RWPE1 (cell line): ENCODE measurements at regions of chr17 and their contacts with region 1.

Region 1: GRCh38 chr17:75774991-75775668 is 9.5 kb upstream of the UNK start:
- DNase-seq: no peak
- H3K27ac ChIP-seq: peak overlapping the region; percentile 73
- CTCF ChIP-seq: no peak

Region 2: DNA sequence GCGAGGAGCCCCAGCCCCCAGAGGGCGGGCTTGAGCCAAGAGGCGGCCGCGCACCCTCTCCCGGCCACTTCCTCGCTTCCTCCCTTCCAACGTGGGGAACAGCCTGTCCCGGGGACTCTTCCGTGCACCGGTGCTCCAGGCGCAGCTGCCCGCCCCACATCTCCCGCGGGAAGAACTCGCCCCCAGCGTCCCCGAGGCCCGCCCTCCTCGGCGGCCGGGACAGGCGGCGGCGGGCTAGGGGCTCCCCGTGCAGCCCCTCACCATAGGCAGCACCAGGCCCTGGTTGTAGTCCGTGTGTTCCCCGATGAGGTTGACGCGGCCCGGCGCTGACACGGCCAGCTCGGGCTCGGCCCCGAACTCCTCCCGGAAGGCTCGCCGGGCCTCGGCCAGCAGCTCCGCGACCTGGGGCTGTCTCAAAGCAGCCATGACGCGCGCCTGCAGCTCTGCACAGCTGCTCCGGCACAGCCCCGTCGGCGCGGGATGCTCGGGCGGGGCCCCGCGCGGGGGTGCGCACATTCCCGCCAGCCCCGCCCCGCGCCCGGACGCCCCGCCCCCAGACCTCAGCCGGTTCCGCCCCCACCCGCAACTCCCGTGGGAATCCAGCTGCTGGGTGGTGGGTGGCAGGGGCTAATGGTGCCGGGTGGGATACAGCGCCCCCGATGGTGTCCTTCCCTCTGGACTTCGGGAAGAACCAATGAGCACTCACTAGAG is 10.3 kb before region 1 on chr17 and contains the start of gene GALK1:
- CTCF ChIA-PET with region 1: interaction called, 15 read pairs
- POLR2A ChIA-PET with region 1: no interaction called
- DNase-seq: peak; percentile 73
- H3K27ac ChIP-seq: peak within 1 kb of the TSS; percentile 98
- CTCF ChIP-seq: peak; percentile 71

Region 3: DNA sequence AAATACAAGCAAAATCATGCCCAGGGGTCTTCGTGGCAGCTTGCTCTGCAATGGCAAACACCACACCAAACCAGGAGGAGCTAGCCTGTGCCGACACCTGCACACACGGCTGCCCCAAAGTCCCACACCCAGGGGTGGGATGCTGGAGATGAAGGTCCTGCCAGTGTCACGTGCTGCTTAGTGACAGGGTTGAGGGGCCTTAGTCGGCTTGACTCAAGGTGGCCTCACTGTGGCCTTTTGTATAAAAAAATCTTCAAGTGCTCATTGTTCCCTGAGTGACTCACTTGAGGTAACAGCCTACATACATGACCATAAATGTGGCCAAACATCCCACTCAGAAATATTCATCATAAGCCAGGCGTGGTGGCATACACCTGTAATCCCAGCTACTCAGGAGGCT is 114.3 kb after region 1 on chr17:
- CTCF ChIA-PET with region 1: no interaction called
- POLR2A ChIA-PET with region 1: interaction called, 12 read pairs
- DNase-seq: no peak
- H3K27ac ChIP-seq: peak overlapping the region; percentile 45
- CTCF ChIP-seq: no peak